ENCODE measurements at regions of chr18 and their contacts with region 1.

Region 1: DNA sequence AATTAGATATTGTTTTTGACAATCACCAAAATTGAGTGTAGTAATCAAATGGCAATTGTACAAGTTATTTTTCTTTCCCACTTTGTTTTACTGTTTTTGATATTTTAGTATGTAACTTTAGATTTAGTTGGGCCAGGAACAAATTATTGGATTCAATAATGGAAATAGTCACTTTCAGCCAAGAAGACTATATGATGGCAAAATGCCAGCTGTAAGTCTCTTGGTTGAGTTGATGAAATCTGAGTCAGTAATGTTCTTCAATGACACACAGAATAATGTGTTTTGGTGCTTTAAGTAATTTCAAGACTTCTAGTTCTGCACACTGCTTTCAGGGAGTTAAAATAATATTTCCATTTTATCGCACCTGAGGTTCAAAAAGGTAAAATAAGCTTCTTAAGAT is 2022.0 kb upstream of the CELF4 start:
- DNase-seq: no peak
- ATAC-seq: no peak
- H3K4me3 ChIP-seq: no peak overlapping the region
- H3K27ac ChIP-seq: no peak overlapping the region
- H3K4me1 ChIP-seq: no peaks in the 10 kb centered on the region
- H3K27me3 ChIP-seq: no peaks in the 10 kb centered on the region
- CTCF ChIP-seq: no peak
- POLR2A ChIP-seq: no peak
- RAD21 ChIP-seq: no peak

Region 2: DNA sequence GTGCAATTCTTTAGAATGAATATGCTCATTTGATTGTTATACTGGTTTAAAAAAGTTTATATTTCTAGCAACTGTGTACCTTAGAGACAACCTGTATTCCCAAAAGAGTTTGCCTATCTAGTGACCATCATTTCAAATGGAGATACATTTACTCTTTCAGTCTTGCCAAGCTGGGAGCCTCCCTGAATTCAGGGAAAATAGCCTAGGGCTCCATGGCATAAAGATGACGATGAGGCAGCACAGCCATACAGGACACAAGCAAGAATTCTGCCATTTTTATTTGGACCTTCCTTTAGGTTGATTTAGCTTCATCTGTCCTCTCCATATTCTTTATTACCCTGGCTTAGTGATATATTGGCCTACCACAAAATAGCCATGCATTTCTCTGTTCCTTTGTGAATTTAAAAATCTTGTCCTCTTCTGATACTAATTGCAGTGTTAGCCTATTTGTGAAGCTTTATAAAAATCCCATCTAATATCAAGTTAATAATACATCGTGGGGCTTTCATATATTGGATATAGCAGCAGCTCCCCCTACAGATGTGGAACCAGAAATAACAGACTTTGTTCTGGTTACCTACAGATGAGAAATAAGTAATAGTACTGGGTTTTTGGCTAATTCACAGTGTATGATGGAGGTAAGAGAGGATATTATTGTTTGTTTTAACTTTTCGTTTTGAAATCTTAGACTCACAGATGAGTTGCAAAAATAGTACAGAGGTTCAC is 705.6 kb after region 1 on chr18:
- CTCF ChIA-PET with region 1: no interaction called
- POLR2A ChIA-PET with region 1: no interaction called
- RAD21 ChIA-PET with region 1: no interaction called
- intact Hi-C with region 1: loop called (anchors 10 kb)
- DNase-seq: no peak
- ATAC-seq: no peak
- H3K4me3 ChIP-seq: no peak overlapping the region
- H3K27ac ChIP-seq: no peak overlapping the region
- H3K4me1 ChIP-seq: no peaks in the 10 kb centered on the region
- H3K27me3 ChIP-seq: no peaks in the 10 kb centered on the region
- CTCF ChIP-seq: peak in 1 of 3 experiments; percentile 22; a peak in 2 of 6 replicates
- POLR2A ChIP-seq: no peak
- RAD21 ChIP-seq: peak; percentile 32